ENCODE measurements at regions of chr2 and their contacts with region 1.

Region 1: DNA sequence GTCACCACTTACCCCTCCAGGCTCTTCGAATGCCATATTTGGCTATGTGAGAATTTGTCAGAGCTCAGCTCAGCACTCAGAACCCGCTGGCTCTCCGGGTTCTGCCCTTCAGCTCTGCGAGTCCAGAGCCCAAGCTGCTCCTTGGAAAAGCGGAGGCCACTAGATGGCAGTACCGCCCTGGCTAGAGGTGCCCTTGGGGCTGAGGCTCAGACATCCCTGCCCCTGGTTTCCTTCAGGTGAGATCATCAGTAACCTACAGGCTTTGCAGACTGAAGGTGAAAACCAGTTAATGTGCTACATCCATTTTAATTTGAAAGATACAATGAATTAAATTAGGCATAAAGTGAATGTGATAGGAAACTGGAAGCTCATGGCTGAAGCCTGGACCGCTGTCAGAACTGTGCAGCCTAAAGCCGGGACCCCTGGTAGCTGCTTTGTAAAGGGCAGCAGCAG is 285.6 kb downstream of the AGAP1 start:
- DNase-seq: peak; percentile 53 to 80 (median 75)
- H3K4me3 ChIP-seq: no peak overlapping the region
- H3K27ac ChIP-seq: no peak overlapping the region
- H3K4me1 ChIP-seq: no peaks in the 10 kb centered on the region
- H3K27me3 ChIP-seq: no peaks in the 10 kb centered on the region
- CTCF ChIP-seq: peak in 1 of 3 donors; percentile 41
- EP300 ChIP-seq: no peak
- POLR2A ChIP-seq: no peak

Region 2: DNA sequence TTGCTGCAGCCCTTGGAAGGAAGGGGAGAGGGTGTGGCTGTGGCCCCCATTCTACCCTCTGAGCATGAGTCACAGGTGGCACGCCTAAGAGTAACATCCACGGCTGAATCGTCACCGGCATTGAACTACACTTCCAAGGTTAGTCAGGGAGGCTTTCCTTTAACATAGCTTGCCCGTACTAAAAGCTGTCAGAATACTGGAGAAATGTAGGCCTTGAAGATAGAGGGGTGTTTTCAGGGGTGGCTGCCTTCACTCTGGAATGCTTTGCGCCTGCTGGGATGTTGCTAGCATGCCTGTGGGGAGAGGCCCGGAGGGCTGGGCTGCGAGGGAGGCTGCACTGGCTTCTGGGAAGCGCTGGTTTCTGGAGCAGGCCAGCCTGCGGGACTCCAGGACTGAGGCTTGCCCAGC is 48.1 kb after region 1 on chr2:
- intact Hi-C with region 1: no loop called
- DNase-seq: no peak
- H3K4me3 ChIP-seq: no peak overlapping the region
- H3K27ac ChIP-seq: no peak overlapping the region
- H3K4me1 ChIP-seq: no peaks in the 10 kb centered on the region
- H3K27me3 ChIP-seq: no peaks in the 10 kb centered on the region
- CTCF ChIP-seq: no peak
- EP300 ChIP-seq: no peak
- POLR2A ChIP-seq: no peak

Region 3: DNA sequence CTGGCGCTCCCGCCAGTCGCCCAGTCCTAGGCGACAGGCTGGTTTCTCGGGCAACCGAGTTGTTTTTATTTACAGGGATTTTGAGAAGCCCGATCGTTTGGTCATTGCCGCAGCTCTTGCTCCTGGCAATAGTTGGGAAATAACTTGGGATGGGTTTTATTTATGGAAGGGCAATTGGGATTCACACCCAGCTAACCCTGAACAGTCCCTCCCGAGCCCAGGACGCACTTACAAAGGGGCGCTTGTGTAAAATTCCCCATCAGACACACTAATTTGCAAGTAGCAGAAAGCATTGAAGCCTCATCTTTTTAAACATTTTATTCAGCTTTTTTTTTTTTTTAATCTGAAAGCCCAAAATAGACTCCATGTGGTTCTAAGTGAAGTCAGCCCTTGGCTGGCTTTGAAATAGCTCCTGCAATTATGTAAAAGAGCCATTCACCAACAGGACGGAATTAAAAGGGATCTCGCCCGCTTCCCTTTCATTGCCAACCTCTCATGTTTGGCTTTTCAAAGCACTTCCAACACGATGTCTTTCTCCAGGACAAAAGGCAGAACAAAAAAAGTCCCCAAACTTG is 392.3 kb after region 1 on chr2:
- intact Hi-C with region 1: loop called in 1 of 4 experiments (anchors 5 kb)
- DNase-seq: no peak
- H3K4me3 ChIP-seq: no peak overlapping the region
- H3K27ac ChIP-seq: no peak overlapping the region
- H3K4me1 ChIP-seq: peaks cover 7% of the 10 kb centered on the region
- H3K27me3 ChIP-seq: peaks cover 5% of the 10 kb centered on the region
- CTCF ChIP-seq: no peak
- EP300 ChIP-seq: no peak
- POLR2A ChIP-seq: no peak

Region 4: GRCh38 chr2:236180831-236181453 is 401.5 kb after region 1 on chr2:
- intact Hi-C with region 1: loop called in 2 of 4 experiments (anchors 5 kb)
- DNase-seq: peak; percentile 28 to 62 (median 55)
- H3K4me3 ChIP-seq: no peak overlapping the region
- H3K27ac ChIP-seq: no peak overlapping the region
- H3K4me1 ChIP-seq: peaks cover 3% of the 10 kb centered on the region
- H3K27me3 ChIP-seq: no peaks in the 10 kb centered on the region
- CTCF ChIP-seq: peak; percentile 23 to 44 (median 32)
- EP300 ChIP-seq: no peak
- POLR2A ChIP-seq: no peak

Measured in ovary (tissue), 10 donors.